A673 (cell line): ENCODE measurements at regions of chr18 and their contacts with region 1.

Region 1: DNA sequence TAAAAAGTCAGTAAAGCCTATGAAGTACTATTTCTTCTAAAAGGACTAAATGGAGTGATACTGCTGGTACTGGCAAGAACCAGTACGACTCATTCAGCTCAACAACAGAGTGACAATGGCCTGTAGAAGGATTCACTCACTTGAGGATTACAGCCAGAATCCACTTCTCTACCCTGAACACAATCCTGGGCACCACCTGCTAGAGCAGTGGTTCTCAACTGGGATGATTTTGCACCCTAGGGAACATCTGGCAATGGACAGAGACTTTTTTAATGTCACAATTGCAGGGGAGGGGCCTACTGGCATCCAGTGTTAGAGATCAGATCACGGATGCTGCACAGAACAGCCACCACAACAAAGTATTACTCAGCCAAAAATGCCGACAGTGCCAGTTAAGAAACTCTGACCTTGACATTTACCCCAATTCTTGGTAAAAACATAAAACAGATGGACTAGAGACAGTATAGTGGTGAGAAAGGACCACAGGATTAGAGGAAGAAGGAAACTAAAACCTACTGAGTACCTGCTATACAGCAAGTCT is 5.0 kb downstream of the SPIRE1 start:
- DNase-seq: no peak
- H3K4me3 ChIP-seq: no peak overlapping the region
- H3K27ac ChIP-seq: no peak overlapping the region
- H3K4me1 ChIP-seq: peaks cover 24% of the 10 kb centered on the region
- H3K27me3 ChIP-seq: no peaks in the 10 kb centered on the region
- CTCF ChIP-seq: no peak

Region 2: GRCh38 chr18:12278741-12279682 is 373.9 kb before region 1 on chr18:
- CTCF ChIA-PET with region 1: no interaction called
- POLR2A ChIA-PET with region 1: no interaction called
- intact Hi-C with region 1: loop called (anchors 5 kb)
- DNase-seq: no peak
- H3K4me3 ChIP-seq: no peak overlapping the region
- H3K27ac ChIP-seq: no peak overlapping the region
- H3K4me1 ChIP-seq: no peaks in the 10 kb centered on the region
- H3K27me3 ChIP-seq: no peaks in the 10 kb centered on the region
- CTCF ChIP-seq: no peak

Region 3: GRCh38 chr18:12336875-12337274 is 316.1 kb before region 1 on chr18:
- CTCF ChIA-PET with region 1: no interaction called
- POLR2A ChIA-PET with region 1: no interaction called
- intact Hi-C with region 1: no loop called
- DNase-seq: no peak
- H3K4me3 ChIP-seq: no peak overlapping the region
- H3K27ac ChIP-seq: no peak overlapping the region
- H3K4me1 ChIP-seq: peaks cover 25% of the 10 kb centered on the region
- H3K27me3 ChIP-seq: no peaks in the 10 kb centered on the region
- CTCF ChIP-seq: no peak

Region 4: GRCh38 chr18:12543697-12544096 is 109.2 kb before region 1 on chr18:
- CTCF ChIA-PET with region 1: no interaction called
- POLR2A ChIA-PET with region 1: no interaction called
- intact Hi-C with region 1: loop called (anchors 5 kb)
- DNase-seq: no peak
- H3K4me3 ChIP-seq: no peak overlapping the region
- H3K27ac ChIP-seq: no peak overlapping the region
- H3K4me1 ChIP-seq: no peaks in the 10 kb centered on the region
- H3K27me3 ChIP-seq: no peaks in the 10 kb centered on the region
- CTCF ChIP-seq: no peak

Region 5: GRCh38 chr18:12604445-12605007 is 48.4 kb before region 1 on chr18:
- CTCF ChIA-PET with region 1: no interaction called
- POLR2A ChIA-PET with region 1: no interaction called
- intact Hi-C with region 1: loop called (anchors 5 kb)
- DNase-seq: no peak
- H3K4me3 ChIP-seq: no peak overlapping the region
- H3K27ac ChIP-seq: no peak overlapping the region
- H3K4me1 ChIP-seq: peaks cover 9% of the 10 kb centered on the region
- H3K27me3 ChIP-seq: no peaks in the 10 kb centered on the region
- CTCF ChIP-seq: peak; percentile 30; the same call in 1 of the 2 replicates